Posterior vena cava (tissue), 2 donors: ENCODE measurements at regions of chr16 and their contacts with region 1.

Region 1: GRCh38 chr16:61909074-61909473 is 127.2 kb downstream of the CDH8 start:
- DNase-seq: no peak

Region 2: DNA sequence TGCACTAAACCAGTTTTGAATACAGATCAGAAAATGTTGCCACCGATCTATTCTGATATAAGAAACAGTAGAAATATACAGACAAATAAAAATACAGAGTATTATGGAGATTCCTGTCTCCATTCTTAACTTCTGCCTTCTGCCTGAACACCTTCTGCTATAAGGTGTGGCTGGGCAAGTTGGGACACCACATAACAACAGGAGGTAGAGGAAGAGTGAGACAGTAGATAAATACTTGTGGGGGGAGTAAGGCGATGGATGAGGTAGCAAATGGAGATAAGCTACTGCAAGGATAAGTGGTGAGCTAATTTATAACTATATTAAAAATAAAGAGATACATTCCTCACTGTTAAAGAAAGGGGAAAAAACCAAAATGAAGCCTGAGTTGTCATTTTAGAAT is 16.5 kb before region 1 on chr16:
- intact Hi-C with region 1: loop called in 1 of 2 experiments (anchors 1 kb)
- DNase-seq: no peak